BJ (cell line): ENCODE measurements at regions of chr10 and their contacts with region 1.

Region 1: DNA sequence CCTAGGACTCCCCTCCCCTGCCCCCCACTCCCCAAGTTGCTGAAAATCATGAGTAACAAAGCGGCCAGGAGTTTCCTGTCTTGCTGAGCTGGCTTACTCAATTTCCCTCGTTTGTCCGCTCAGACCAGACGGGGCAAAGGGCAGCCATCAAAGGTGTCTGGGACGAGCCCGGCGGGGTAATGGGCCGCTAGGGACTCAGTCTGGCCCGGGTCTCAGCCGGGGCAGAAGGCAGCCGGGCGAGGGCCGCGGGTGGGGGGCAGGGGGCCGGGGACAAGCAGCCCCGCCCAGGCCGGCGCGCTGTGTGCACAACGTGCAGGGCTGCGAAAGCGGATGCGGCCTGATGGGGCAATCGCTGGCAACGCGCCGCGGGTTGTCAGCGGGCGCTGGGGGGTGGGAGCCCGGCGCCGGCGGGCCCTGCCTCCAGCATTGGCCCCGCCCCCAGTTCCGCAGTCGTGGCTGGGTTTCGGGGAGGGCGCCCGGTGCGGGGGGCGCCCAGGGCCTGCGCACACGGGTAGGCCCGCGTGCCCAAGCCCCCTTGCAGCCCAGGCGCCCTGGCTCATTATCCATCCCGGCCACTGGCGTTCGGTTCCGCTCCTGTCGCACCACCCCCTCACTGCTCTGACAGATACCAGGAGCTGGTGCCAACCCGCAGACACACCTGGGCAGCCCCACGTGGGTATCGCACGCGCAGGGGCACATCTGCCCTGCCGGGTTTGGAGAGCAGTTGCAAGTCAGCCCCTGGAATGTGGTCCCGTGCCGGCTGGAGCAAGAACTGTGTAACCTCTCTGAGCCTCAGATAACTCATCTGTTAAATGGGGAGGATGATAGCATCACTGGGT is 35.1 kb downstream of the DNAJB12 start:
- DNase-seq: no peak
- H3K4me3 ChIP-seq: peak overlapping the region; percentile 27
- H3K27me3 ChIP-seq: no peaks in the 10 kb centered on the region
- CTCF ChIP-seq: no peak

Region 2: GRCh38 chr10:72260588-72261322 is 58.9 kb before region 1 on chr10:
- CTCF ChIA-PET with region 1: interaction called, 4 read pairs
- POLR2A ChIA-PET with region 1: interaction called, 16 read pairs
- DNase-seq: no peak
- H3K4me3 ChIP-seq: peak overlapping the region; percentile 31
- H3K27me3 ChIP-seq: no peaks in the 10 kb centered on the region
- CTCF ChIP-seq: 0 out of 2 replicates have a peak, but pooled peaks have one; percentile 8

Region 3: GRCh38 chr10:72273410-72274212 is 46.0 kb before region 1 on chr10 and contains the start of gene DDIT4:
- CTCF ChIA-PET with region 1: interaction called, 15 read pairs
- POLR2A ChIA-PET with region 1: interaction called, 13 read pairs
- DNase-seq: peak; percentile 97
- H3K4me3 ChIP-seq: peak within 1 kb of the TSS; percentile 89
- H3K27me3 ChIP-seq: no peaks in the 10 kb centered on the region
- CTCF ChIP-seq: no peak
- polyA plus RNA-seq, gene DDIT4: 152 and 174 TPM in 2 replicates

Region 4: DNA sequence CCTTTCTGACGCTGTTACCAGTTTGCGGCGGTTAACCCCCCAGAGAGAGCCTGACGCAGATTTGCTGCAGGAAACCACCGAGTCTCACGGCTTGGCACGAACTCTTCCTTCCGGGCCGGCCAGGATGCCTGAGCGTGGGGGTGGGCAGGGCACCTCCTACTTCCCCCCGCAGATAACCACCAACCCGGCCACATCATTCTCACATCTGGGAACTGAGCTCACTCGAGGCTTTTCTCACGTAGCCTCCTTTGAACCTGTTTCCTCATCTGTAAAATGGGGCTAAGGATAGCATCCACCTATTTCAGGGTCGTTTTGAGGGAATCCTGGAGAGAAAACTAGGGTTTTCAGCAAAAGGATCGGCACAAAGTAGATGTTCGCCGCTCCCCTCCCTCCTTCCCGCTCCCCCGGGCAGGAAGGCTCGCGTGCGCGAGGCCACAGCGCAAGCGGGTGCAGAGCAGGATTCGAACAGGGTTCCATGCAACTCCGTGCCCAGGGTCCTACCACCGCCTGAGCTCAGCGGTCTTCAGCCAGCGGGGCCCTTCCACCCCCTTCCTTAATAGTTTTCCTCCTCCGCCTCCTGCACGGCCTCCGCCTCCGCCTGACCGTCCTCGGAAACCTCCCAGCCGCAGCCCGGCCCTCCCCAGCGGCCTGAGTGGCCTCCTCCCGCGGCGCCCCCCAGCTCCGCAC is 22.2 kb before region 1 on chr10:
- CTCF ChIA-PET with region 1: no interaction called
- POLR2A ChIA-PET with region 1: interaction called, 10 read pairs
- DNase-seq: peak; percentile 84
- H3K4me3 ChIP-seq: peak overlapping the region; percentile 53
- H3K27me3 ChIP-seq: no peaks in the 10 kb centered on the region
- CTCF ChIP-seq: no peak

Region 5: GRCh38 chr10:72337020-72337629 is 17.5 kb after region 1 on chr10:
- CTCF ChIA-PET with region 1: interaction called, 11 read pairs
- POLR2A ChIA-PET with region 1: no interaction called
- DNase-seq: no peak
- H3K4me3 ChIP-seq: no peak overlapping the region
- H3K27me3 ChIP-seq: no peaks in the 10 kb centered on the region
- CTCF ChIP-seq: peak; percentile 95

Region 6: GRCh38 chr10:72354478-72355213 is 35.0 kb after region 1 on chr10 and contains the start of gene DNAJB12:
- CTCF ChIA-PET with region 1: no interaction called
- POLR2A ChIA-PET with region 1: no interaction called
- DNase-seq: peak; percentile 50
- H3K4me3 ChIP-seq: peak within 1 kb of the TSS; percentile 85
- H3K27me3 ChIP-seq: no peaks in the 10 kb centered on the region
- CTCF ChIP-seq: no peak
- polyA plus RNA-seq, gene DNAJB12: 26.4 and 38.8 TPM in 2 replicates

Region 7: DNA sequence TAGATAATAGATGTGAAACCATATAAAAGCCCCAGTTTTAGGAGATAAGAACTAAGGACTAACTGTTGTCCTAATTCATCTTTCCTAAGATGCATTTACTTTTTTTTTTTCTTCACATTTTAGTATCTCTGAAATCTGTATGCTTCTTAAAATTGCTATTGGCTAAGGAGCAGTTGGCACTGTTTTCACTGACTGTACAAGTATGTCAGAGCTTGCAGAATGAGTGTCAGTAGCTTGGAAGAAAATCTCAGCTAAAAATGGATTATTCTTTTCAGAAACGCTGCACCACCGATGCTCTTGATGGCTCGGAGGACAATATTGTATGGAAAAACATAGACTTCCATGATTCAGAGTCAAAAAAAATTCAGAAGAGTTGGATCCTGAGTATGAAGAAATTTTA is 126.2 kb after region 1 on chr10:
- CTCF ChIA-PET with region 1: no interaction called
- POLR2A ChIA-PET with region 1: no interaction called
- DNase-seq: no peak
- H3K4me3 ChIP-seq: no peak overlapping the region
- H3K27me3 ChIP-seq: no peaks in the 10 kb centered on the region
- CTCF ChIP-seq: no peak

Region 8: DNA sequence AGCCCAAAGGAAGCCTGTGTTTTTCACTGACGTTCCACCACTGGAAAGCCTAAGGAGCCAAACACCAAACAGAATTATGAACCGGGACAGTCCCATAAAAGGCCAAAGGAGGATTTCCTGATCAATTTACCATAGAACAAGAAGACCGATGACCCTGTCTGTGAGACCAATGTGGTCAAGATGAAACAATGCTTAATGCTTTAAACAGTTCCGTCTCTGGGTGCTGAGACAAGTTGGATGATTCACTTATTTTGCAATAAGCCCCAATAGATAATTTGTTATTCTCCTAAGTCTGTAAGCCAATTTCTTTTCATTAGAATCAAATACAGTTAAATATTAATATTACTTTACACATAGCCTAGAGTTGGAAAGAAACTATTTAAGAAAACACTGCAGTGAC is 171.3 kb after region 1 on chr10:
- CTCF ChIA-PET with region 1: no interaction called
- POLR2A ChIA-PET with region 1: no interaction called
- DNase-seq: no peak
- H3K4me3 ChIP-seq: no peak overlapping the region
- H3K27me3 ChIP-seq: no peaks in the 10 kb centered on the region
- CTCF ChIP-seq: no peak

Region 9: DNA sequence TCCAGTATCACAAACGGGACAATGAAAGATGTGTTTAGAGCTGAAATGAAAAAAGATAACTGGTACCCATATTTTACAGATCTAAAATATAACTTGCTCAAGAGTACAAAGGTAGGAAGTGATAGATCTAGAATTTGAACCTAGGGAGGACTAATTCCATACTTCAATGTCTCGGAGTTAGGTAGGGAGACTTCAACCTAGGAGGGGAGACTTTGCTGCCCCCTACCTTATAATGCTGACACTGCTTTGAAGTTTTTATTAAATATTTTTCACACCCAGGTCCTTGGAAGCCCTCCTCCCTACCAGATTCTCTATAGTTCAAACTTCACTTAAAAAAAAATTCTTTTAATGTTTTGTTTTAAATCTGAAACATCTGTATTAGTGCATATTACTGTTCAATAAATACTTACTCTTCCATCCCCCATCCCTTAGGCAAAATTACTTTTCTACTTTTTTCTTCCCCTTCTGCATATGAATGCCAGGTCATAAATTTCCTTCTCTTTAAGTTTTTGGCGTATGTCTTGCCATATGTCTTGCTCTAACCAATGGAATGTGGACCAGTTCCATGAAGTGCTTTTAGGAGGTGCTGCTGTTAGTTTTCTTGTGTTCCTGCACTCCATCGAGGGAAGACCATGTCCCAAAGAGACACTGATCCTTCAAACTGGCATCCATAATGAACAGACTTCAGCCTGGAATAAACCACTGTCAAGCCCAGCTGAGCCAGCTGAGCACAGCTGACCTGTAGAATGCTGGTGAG is 248.4 kb after region 1 on chr10:
- CTCF ChIA-PET with region 1: no interaction called
- POLR2A ChIA-PET with region 1: interaction called, 11 read pairs
- DNase-seq: no peak
- H3K4me3 ChIP-seq: no peak overlapping the region
- H3K27me3 ChIP-seq: no peaks in the 10 kb centered on the region
- CTCF ChIP-seq: peak; percentile 23; the same call in 1 of the 2 replicates